OCI-LY7 (cell line): ENCODE measurements at regions of chr14 and their contacts with region 1.

Region 1: GRCh38 chr14:102917469-102918211 is 4.8 kb upstream of the AMN start:
- DNase-seq: peak; percentile 78
- H3K4me3 ChIP-seq: no peak overlapping the region
- H3K27ac ChIP-seq: no peak overlapping the region
- H3K4me1 ChIP-seq: peaks cover 28% of the 10 kb centered on the region
- CTCF ChIP-seq: peak; percentile 88

Region 2: DNA sequence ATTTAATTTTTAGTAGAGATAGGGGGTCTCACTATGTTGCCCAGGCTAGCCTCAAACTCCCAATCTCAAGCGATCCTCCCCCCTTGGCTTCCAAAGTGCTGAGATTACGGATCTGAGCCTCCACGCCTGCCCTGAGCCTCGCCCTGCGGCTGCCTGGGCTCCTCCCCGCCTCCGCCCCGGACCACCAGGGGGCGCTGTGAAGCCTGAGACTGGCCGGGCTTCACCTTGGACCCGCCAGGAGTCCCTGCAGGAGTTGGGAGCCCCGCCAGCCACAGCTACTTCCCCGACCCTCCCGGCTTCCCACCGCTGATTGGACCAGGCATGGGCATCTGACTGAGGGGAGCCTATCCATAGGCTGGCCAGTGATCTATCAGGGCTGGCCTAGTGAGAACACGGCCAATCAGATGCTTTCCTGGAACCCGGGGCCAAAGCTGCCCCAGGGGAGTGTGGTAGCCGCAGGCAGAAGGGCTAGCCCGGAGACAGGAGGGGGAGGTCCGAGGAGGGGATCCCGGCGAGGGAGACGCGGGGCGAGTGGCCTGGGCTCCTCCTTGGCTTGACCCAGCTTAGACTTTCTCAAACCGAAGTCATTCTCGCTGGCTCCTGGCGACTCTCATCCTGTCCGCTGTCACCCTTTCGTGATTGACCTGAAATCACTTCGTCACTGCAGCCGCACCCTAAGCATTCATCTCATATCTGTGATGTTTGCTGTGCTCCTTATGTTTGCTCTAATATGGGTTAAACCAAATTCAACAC is 393.0 kb before region 1 on chr14:
- CTCF ChIA-PET with region 1: interaction called, 3 read pairs
- POLR2A ChIA-PET with region 1: interaction called, 6 read pairs
- intact Hi-C with region 1: loop called (anchors 5 kb)
- DNase-seq: peak; percentile 98
- H3K4me3 ChIP-seq: peak overlapping the region; percentile 67
- H3K27ac ChIP-seq: peak overlapping the region; percentile 47
- H3K4me1 ChIP-seq: peaks cover 18% of the 10 kb centered on the region
- CTCF ChIP-seq: peak; percentile 95

Region 3: DNA sequence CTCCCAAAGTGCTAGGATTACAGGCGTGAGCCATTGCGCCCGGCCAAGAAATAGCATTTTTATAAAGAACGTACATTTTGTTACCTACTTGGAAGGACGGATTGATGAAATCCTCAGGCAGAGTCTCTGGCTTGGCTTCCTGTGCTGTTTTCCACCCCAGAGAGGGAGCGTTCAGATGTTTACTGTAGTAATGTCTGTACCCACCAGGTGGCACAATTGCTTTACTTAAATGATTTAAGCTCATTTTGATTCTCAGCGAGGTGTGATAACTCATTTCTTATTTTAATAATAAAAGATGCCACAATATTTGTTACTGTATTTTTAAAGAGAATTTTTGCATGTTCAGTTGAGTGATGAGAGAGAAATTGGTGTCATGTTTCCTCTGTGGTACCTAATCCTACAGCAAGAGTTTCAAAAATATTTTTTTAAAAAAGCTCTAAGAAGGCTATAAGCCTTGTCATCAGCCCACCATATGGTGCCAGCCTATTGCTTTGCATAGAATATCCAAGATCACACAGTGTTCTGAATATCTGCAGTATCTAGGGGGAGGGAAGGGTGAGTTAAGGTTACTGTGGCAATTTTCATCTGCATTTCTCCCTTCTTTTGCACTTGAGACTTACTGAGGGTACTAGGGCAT is 223.0 kb before region 1 on chr14:
- CTCF ChIA-PET with region 1: interaction called, 4 read pairs
- POLR2A ChIA-PET with region 1: no interaction called
- intact Hi-C with region 1: loop called (anchors 1 kb)
- DNase-seq: peak; percentile 78
- H3K4me3 ChIP-seq: no peak overlapping the region
- H3K27ac ChIP-seq: no peak overlapping the region
- H3K4me1 ChIP-seq: peaks cover 4% of the 10 kb centered on the region
- CTCF ChIP-seq: peak; percentile 87

Region 4: DNA sequence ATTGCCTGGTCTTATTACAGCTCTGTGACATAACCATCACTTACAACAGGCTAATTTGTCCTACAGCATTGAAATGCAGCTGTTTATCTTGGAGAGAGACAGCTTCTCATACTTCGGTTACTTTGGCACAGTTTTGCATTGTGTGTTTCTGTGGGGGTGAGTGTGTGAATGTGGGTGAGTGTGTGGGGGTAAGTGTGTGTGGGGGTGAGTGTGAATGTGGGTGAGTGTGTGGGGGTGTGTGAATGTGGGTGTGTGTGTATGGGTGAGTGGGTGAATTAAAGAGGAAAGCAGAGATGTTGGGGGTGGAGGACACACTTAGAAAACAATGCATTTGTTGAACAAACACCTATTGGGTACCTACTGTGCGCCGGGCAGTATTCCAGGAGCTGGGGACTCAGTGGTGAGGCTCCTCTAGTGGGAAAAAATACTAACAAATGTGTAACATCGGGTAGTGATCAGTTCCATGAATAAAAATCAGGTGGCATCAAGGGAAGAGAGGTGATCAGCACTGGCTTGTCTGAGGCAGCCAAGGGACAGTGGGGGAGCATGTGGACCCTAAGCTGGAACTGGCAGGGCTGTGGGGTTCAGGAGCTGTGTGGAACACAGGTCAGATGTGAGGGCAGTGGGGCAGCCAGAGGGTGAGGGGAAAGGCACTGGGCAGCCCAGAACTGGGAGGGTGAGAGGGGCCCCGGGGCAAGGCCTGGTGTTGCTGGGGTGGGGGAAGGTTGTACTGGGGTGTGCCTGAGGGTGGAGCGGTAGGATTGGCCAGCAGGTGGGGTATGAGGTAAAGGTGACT is 39.3 kb before region 1 on chr14:
- CTCF ChIA-PET with region 1: no interaction called
- POLR2A ChIA-PET with region 1: no interaction called
- intact Hi-C with region 1: loop called (anchors 2 kb)
- DNase-seq: peak; percentile 29
- H3K4me3 ChIP-seq: no peak overlapping the region
- H3K27ac ChIP-seq: no peak overlapping the region
- H3K4me1 ChIP-seq: no peaks in the 10 kb centered on the region
- CTCF ChIP-seq: peak; percentile 53